Activated T-helper 1 cell treated with anti-CD3 and anti-CD28 coated beads, Interleukin-12 subunit alpha, Interleukin-12 subunit beta, Interleukin-2, Interleukin-4 antibody, amounts not matched to agents 30 ng/mL and 10 ng/mL and 1 ng/mL, durations not matched to agents 14 hours and 24 hours and 36 hours (primary cell): ENCODE measurements at regions of chr18 and their contacts with region 1.

Region 1: GRCh38 chr18:57881818-57882413 is 78.8 kb upstream of the ATP8B1 start:
- DNase-seq: peak; percentile 13
- H3K4me3 Mint-ChIP-seq: no peak overlapping the region
- H3K27ac Mint-ChIP-seq: no peak overlapping the region
- H3K4me1 Mint-ChIP-seq: no peaks in the 10 kb centered on the region
- H3K27me3 Mint-ChIP-seq: peaks cover 3% of the 10 kb centered on the region

Region 2: DNA sequence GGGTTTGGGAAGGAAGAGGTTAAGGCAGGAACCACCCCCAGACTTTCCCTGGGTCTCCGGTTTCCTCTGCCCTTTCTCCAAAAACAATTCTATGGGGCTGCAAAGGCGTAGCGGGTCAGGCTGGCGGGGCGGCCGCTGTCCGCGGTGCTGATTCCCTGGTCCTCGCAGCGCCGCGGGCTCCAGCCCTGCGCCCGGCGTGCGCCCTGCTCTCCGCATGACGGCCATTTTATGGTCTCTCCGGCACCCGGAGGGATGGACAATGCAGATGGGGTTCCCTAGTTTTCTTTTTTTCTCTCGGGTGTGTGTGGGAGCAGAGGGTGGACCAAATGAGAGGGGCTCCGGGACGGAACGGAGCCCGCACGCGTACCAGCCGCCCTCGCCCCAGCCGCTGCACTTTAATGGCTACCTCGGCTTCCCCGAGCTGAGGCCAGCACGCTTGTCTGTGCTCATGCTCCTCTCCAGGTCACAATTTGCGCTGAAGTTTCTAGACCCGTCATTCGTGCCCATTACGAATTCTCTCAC is 527.9 kb before region 1 on chr18:
- intact Hi-C with region 1: no loop called
- DNase-seq: no peak
- H3K4me3 Mint-ChIP-seq: no peak overlapping the region
- H3K27ac Mint-ChIP-seq: no peak overlapping the region
- H3K4me1 Mint-ChIP-seq: no peaks in the 10 kb centered on the region
- H3K27me3 Mint-ChIP-seq: peaks cover 38% of the 10 kb centered on the region

Region 3: DNA sequence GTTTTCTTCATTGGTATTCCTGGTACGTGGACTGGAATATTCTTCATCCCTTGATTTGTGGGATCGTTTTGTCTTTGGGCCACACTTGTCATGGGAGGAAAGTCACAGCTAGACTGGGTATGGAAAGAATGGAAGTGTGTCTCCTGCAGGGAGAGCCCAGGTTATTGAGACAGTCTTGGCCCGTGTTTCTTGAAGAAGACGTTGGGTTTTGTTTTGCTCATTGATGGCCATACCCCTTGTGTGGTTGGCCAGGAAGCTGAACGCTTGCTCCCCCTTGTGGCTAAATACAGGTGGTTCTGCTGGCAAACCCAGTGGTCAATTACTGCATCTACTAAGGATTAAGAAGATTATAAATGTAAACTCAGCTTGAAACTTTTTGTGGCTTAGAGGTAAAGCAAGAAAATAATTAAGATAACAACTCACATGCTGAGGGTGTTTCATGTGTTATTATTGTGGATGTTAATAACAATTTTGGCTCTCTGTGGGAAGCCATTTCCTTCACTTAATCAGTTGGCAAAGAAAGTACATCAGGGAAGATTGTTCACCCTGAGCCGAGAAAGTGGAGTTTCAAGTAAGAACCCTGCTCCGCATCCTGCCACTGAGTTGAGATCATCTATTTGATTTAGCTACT is 253.9 kb after region 1 on chr18:
- intact Hi-C with region 1: loop called (anchors 5 kb)
- DNase-seq: peak; percentile 20
- H3K4me3 Mint-ChIP-seq: no peak overlapping the region
- H3K27ac Mint-ChIP-seq: no peak overlapping the region
- H3K4me1 Mint-ChIP-seq: peaks cover 10% of the 10 kb centered on the region
- H3K27me3 Mint-ChIP-seq: peaks cover 9% of the 10 kb centered on the region

Region 4: DNA sequence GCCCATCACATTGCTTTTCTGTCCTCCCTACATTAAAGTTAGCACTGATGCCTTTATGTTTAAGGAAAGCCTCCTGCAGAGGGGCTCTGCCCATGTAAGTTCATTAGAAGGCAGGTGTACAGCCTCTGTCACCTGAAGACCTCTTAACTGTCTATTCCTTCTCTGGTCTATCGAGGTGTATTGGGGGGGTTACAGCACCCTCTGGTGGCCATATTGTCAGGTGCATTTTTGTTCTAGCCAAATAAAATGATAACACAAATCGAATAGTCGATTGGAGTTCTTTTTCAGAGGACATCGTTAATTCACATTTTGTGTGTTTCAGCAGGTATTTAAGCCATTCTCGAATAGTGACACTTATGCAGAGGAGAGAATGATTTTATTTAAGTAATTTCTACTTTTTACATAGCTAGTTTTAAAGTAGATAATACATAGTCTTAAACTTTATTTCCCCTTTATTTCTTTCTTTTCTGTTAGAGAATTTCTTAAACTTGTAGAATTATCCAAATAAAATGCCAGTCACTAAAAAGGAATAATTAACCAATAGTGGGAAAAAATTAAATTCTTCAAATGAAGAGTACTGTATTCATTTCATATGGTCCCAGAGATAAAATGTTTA is 298.9 kb after region 1 on chr18:
- intact Hi-C with region 1: loop called (anchors 1 kb)
- DNase-seq: peak; percentile 11
- H3K4me3 Mint-ChIP-seq: no peak overlapping the region
- H3K27ac Mint-ChIP-seq: no peak overlapping the region
- H3K4me1 Mint-ChIP-seq: no peaks in the 10 kb centered on the region
- H3K27me3 Mint-ChIP-seq: peaks cover 9% of the 10 kb centered on the region